Endothelial cell of umbilical vein (primary cell): ENCODE measurements at regions of chr5 and their contacts with region 1.

Region 1: GRCh38 chr5:93894601-93895354 is 153.4 kb upstream of the POU5F2 start:
- DNase-seq: peak; percentile 21
- H3K4me3 ChIP-seq: no peak overlapping the region
- H3K27ac ChIP-seq: no peak overlapping the region
- H3K4me1 ChIP-seq: no peaks in the 10 kb centered on the region
- H3K27me3 ChIP-seq: no peaks in the 10 kb centered on the region
- CTCF ChIP-seq: peak; percentile 30 to 44
- POLR2A ChIP-seq: no peak

Region 2: GRCh38 chr5:93607367-93608258 is 287.2 kb before region 1 on chr5:
- CTCF ChIA-PET with region 1: interaction called, 11 read pairs
- POLR2A ChIA-PET with region 1: no interaction called
- dilution Hi-C with region 1: no loop called
- intact Hi-C with region 1: loop called (anchors 5 kb)
- DNase-seq: peak; percentile 74
- H3K4me3 ChIP-seq: no peak overlapping the region
- H3K27ac ChIP-seq: no peak overlapping the region
- H3K4me1 ChIP-seq: peaks cover 6% of the 10 kb centered on the region
- H3K27me3 ChIP-seq: peaks cover 71 to 98% of the 10 kb centered on the region in 2 experiments
- CTCF ChIP-seq: peak; percentile 28 to 59
- POLR2A ChIP-seq: no peak

Region 3: GRCh38 chr5:93883459-93883858 is 11.3 kb before region 1 on chr5:
- CTCF ChIA-PET with region 1: interaction called, 16 read pairs
- POLR2A ChIA-PET with region 1: no interaction called
- dilution Hi-C with region 1: no loop called
- intact Hi-C with region 1: no loop called
- DNase-seq: no peak
- H3K4me3 ChIP-seq: no peak overlapping the region
- H3K27ac ChIP-seq: no peak overlapping the region
- H3K4me1 ChIP-seq: no peaks in the 10 kb centered on the region
- H3K27me3 ChIP-seq: no peaks in the 10 kb centered on the region
- CTCF ChIP-seq: no peak
- POLR2A ChIP-seq: no peak